ENCODE measurements at regions of chr11 and their contacts with region 1.

Region 1: GRCh38 chr11:117037279-117037974 is 60.8 kb downstream of the SIK3 start:
- DNase-seq: no peak
- ATAC-seq: no peak
- H3K4me3 ChIP-seq: no peak overlapping the region
- H3K4me3 Mint-ChIP-seq: peak overlapping the region; percentile 74
- H3K27ac ChIP-seq: peak overlapping the region in 1 of 2 donors; percentile 66
- H3K27ac Mint-ChIP-seq: peak overlapping the region; percentile 87
- H3K4me1 ChIP-seq: peaks cover 23 to 31% of the 10 kb centered on the region in 2 donors
- H3K4me1 Mint-ChIP-seq: peaks cover 62% of the 10 kb centered on the region
- H3K27me3 ChIP-seq: no peaks in the 10 kb centered on the region
- H3K27me3 Mint-ChIP-seq: no peaks in the 10 kb centered on the region
- CTCF ChIP-seq: no peak

Region 2: GRCh38 chr11:117002639-117003299 is 34.7 kb before region 1 on chr11:
- CTCF ChIA-PET with region 1: no interaction called
- POLR2A ChIA-PET with region 1: no interaction called
- intact Hi-C with region 1: loop called (anchors 5 kb)
- DNase-seq: no peak
- ATAC-seq: peak; percentile 24
- H3K4me3 ChIP-seq: no peak overlapping the region
- H3K4me3 Mint-ChIP-seq: no peak overlapping the region
- H3K27ac ChIP-seq: peak overlapping the region in 1 of 2 donors; percentile 53
- H3K27ac Mint-ChIP-seq: peak overlapping the region; percentile 57
- H3K4me1 ChIP-seq: peaks cover 29 to 52% of the 10 kb centered on the region in 2 donors
- H3K4me1 Mint-ChIP-seq: peaks cover 72% of the 10 kb centered on the region
- H3K27me3 ChIP-seq: no peaks in the 10 kb centered on the region
- H3K27me3 Mint-ChIP-seq: no peaks in the 10 kb centered on the region
- CTCF ChIP-seq: no peak

Region 3: GRCh38 chr11:117052196-117053149 is 15.0 kb after region 1 on chr11:
- CTCF ChIA-PET with region 1: no interaction called
- POLR2A ChIA-PET with region 1: no interaction called
- intact Hi-C with region 1: no loop called
- DNase-seq: no peak
- ATAC-seq: no peak
- H3K4me3 ChIP-seq: no peak overlapping the region
- H3K4me3 Mint-ChIP-seq: no peak overlapping the region
- H3K27ac ChIP-seq: no peak overlapping the region
- H3K27ac Mint-ChIP-seq: no peak overlapping the region
- H3K4me1 ChIP-seq: peaks cover 3 to 8% of the 10 kb centered on the region in 2 donors
- H3K4me1 Mint-ChIP-seq: peaks cover 39% of the 10 kb centered on the region
- H3K27me3 ChIP-seq: no peaks in the 10 kb centered on the region
- H3K27me3 Mint-ChIP-seq: no peaks in the 10 kb centered on the region
- CTCF ChIP-seq: no peak

Region 4: GRCh38 chr11:117072517-117073461 is 35.4 kb after region 1 on chr11:
- CTCF ChIA-PET with region 1: no interaction called
- POLR2A ChIA-PET with region 1: no interaction called
- intact Hi-C with region 1: loop called (anchors 5 kb)
- DNase-seq: no peak
- ATAC-seq: no peak
- H3K4me3 ChIP-seq: no peak overlapping the region
- H3K4me3 Mint-ChIP-seq: no peak overlapping the region
- H3K27ac ChIP-seq: no peak overlapping the region
- H3K27ac Mint-ChIP-seq: no peak overlapping the region
- H3K4me1 ChIP-seq: peaks cover 35 to 40% of the 10 kb centered on the region in 2 donors
- H3K4me1 Mint-ChIP-seq: peaks cover 67% of the 10 kb centered on the region
- H3K27me3 ChIP-seq: no peaks in the 10 kb centered on the region
- H3K27me3 Mint-ChIP-seq: no peaks in the 10 kb centered on the region
- CTCF ChIP-seq: no peak